ENCODE measurements at regions of chr17 and their contacts with region 1.

Region 1: GRCh38 chr17:78598013-78598471 is 20.8 kb upstream of the DNAH17 start:
- DNase-seq: no peak
- H3K4me3 Mint-ChIP-seq: no peak overlapping the region
- H3K27ac Mint-ChIP-seq: no peak overlapping the region
- H3K4me1 Mint-ChIP-seq: peaks cover 40% of the 10 kb centered on the region
- H3K27me3 Mint-ChIP-seq: no peaks in the 10 kb centered on the region
- CTCF ChIP-seq: no peak

Region 2: DNA sequence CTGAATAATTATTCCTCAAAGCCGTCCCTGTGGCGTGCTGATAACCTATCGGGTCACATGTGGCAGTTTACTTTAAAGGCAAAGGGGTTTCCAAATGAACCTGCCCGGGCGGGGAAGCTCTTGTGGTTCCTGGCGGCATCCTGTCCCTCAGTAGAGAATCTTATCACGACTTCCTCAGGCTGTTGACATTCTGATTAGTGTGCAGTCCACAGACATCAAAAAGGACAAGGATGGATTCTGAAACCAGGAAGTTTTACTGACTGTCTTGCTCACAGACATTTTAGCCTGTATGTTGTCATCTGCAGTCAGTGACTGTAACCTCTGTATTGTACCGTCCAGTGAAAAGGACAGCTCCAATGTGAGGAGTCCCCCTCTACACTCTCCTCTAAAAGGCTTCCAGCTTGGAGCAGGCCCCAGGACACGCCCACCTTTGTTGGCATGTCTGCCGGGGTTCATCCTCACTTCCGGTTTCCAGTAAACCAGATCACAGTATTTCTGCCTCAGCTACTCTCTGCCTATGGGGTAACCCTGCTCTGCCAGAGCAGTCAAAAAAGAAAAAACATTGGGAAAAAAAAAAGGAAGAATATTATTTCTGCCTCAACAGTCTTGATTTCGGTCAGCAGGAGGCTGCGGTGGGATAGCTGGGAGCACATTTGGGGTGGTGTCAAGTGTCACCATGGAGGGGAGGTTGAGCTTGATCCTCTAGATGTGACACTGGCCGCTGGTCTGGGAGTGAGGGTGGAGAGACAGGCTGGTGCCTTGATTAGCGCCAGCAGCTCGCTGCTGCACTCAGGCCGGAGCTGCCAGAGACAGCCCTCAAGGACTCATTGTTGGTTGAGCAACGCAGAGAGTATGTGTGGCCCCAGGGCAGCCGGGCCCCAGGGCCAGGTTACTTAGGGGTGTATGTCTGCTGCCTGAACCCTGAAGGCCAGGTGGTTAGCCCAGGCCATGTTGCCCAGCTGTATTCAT is 68.2 kb after region 1 on chr17:
- CTCF ChIA-PET with region 1: no interaction called
- intact Hi-C with region 1: loop called (anchors 10 kb)
- DNase-seq: peak; percentile 29
- H3K4me3 Mint-ChIP-seq: no peak overlapping the region
- H3K27ac Mint-ChIP-seq: no peak overlapping the region
- H3K4me1 Mint-ChIP-seq: peaks cover 38% of the 10 kb centered on the region
- H3K27me3 Mint-ChIP-seq: no peaks in the 10 kb centered on the region
- CTCF ChIP-seq: no peak

Region 3: DNA sequence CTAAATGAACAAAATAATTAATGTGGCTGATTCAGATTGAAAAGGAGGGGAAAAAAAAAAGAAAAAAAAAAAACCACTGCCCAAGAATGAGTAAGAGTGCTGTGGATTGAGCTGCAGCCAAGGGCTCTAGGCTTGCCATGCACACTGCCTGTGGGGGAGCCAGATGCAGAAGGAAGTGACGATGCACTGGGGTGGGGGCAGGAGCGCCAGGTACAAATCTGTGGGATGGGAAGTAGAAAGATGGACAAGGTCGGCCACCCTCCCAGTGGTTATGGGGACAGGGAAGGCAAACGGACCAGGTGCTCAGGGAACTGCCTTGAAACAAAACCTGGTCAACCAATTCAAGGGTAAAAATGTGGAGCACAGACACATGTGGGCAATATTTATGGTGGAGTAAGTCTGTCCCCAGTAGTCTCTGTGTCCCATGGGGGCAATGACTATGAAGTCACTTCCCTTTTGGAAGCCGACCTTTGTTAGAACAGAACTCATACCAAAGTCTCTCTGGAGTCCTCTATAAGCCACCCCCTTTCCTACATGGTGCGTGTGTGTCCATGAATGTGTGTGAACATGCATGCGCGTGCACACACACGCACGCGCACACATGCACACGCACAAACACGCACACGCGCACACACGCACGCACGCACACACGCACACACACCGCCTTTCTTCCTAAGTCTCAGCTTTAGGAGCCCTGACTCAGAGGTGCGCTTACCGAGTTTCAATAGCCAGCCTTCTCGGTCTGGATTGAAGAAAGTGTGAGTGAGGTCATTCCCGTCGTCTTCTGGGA is 99.7 kb after region 1 on chr17:
- CTCF ChIA-PET with region 1: no interaction called
- intact Hi-C with region 1: no loop called
- DNase-seq: no peak
- H3K4me3 Mint-ChIP-seq: no peak overlapping the region
- H3K27ac Mint-ChIP-seq: no peak overlapping the region
- H3K4me1 Mint-ChIP-seq: no peaks in the 10 kb centered on the region
- H3K27me3 Mint-ChIP-seq: no peaks in the 10 kb centered on the region
- CTCF ChIP-seq: no peak

Measured in Calu3 (cell line).